ENCODE measurements at regions of chr5 and their contacts with region 1.

Region 1: GRCh38 chr5:30804739-30805505 is 388.6 kb upstream of the CDH6 start:
- DNase-seq: no peak
- ATAC-seq: peak; percentile 53 to 86

Region 2: DNA sequence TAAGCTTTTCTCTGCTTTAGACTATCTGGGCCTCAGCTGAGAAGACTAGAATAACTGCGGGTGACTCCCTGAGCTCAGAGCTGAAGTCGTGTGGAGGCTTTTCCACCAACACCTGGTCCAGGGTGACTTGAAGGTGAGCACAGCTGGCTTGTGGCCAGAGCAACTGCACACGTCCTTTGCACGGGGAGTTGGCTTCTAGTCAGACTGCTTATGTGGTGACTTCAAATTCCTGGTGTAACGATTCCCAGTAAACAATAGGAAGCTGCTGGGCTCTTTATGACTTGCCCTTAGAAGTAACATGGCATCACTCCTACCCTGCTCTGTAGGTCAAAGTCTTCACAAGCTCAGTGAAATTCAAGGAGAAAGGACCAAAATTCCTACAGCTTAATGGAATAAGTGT is 412.0 kb before region 1 on chr5:
- intact Hi-C with region 1: no loop called
- DNase-seq: no peak
- ATAC-seq: no peak

Region 3: GRCh38 chr5:31186672-31187267 is 381.8 kb after region 1 on chr5:
- intact Hi-C with region 1: loop called in 1 of 2 experiments (anchors 5 kb)
- DNase-seq: no peak
- ATAC-seq: no peak